ENCODE measurements at regions of chr5 and their contacts with region 1.

Region 1: GRCh38 chr5:76601470-76601869 is 21.7 kb downstream of the F2RL2 start:
- DNase-seq: peak; percentile 78
- H3K4me3 ChIP-seq: no peak overlapping the region
- H3K27ac ChIP-seq: no peak overlapping the region
- H3K4me1 ChIP-seq: peaks cover 4% of the 10 kb centered on the region
- H3K27me3 ChIP-seq: peaks cover 0 to 2% of the 10 kb centered on the region in 2 experiments
- CTCF ChIP-seq: peak; percentile 52
- POLR2A ChIP-seq: no peak

Region 2: GRCh38 chr5:76571559-76571958 is 29.9 kb before region 1 on chr5:
- CTCF ChIA-PET with region 1: no interaction called
- POLR2A ChIA-PET with region 1: no interaction called
- dilution Hi-C with region 1: no loop called
- intact Hi-C with region 1: no loop called
- DNase-seq: no peak
- H3K4me3 ChIP-seq: no peak overlapping the region
- H3K27ac ChIP-seq: no peak overlapping the region
- H3K4me1 ChIP-seq: no peaks in the 10 kb centered on the region
- H3K27me3 ChIP-seq: peaks cover 2 to 6% of the 10 kb centered on the region in 2 experiments
- CTCF ChIP-seq: no peak
- POLR2A ChIP-seq: no peak

Region 3: DNA sequence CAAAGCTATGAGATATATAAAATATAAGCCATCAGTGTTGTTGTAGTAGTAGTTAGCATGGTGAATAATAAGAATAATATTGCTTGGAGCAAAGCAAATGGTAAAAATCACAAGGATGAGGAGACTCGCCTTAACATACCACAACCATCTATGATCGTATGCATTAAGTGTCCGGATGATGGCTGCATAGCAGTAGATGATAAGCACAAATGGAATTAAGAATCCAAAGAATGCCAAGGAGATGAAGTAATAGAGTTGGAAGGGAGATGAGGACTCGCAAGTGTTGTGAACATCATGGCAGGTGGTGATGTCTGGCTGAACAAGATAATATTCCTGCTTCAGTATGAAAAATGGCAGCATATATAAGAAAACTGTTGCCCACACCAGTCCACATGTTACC is 16.2 kb after region 1 on chr5:
- CTCF ChIA-PET with region 1: interaction called, 11 read pairs
- POLR2A ChIA-PET with region 1: no interaction called
- dilution Hi-C with region 1: no loop called
- intact Hi-C with region 1: no loop called
- DNase-seq: no peak
- H3K4me3 ChIP-seq: no peak overlapping the region
- H3K27ac ChIP-seq: no peak overlapping the region
- H3K4me1 ChIP-seq: no peaks in the 10 kb centered on the region
- H3K27me3 ChIP-seq: no peaks in the 10 kb centered on the region
- CTCF ChIP-seq: no peak
- POLR2A ChIP-seq: no peak

Region 4: DNA sequence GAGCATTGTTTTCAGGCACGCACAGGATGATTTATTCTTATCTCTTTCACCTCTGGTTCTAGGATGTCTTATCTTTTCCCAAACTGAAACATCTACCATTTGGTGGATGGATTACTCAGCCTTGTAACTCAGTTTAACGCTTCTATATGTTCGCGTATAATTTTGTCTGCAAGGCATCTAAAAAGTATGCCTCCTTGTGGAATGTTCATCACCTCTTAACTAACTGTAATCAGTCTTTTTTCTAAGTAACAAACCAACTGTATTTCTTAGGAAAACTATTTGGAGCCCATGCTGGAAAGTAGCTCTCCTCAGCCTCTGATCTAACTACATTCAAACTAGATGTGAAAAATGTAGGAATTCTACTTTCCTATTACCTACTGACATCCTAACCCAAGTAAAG is 33.2 kb after region 1 on chr5:
- CTCF ChIA-PET with region 1: interaction called, 126 read pairs
- POLR2A ChIA-PET with region 1: no interaction called
- dilution Hi-C with region 1: no loop called
- intact Hi-C with region 1: no loop called
- DNase-seq: no peak
- H3K4me3 ChIP-seq: no peak overlapping the region
- H3K27ac ChIP-seq: no peak overlapping the region
- H3K4me1 ChIP-seq: peaks cover 6% of the 10 kb centered on the region
- H3K27me3 ChIP-seq: no peaks in the 10 kb centered on the region
- CTCF ChIP-seq: no peak
- POLR2A ChIP-seq: no peak

Region 5: GRCh38 chr5:76691467-76692138 is 90.1 kb after region 1 on chr5:
- CTCF ChIA-PET with region 1: interaction called, 11 read pairs
- POLR2A ChIA-PET with region 1: no interaction called
- dilution Hi-C with region 1: no loop called
- intact Hi-C with region 1: loop called (anchors 1 kb)
- DNase-seq: peak; percentile 98
- H3K4me3 ChIP-seq: no peak overlapping the region
- H3K27ac ChIP-seq: peak overlapping the region; percentile 91
- H3K4me1 ChIP-seq: peaks cover 79% of the 10 kb centered on the region
- H3K27me3 ChIP-seq: no peaks in the 10 kb centered on the region
- CTCF ChIP-seq: no peak
- POLR2A ChIP-seq: peak; percentile 43

Region 6: DNA sequence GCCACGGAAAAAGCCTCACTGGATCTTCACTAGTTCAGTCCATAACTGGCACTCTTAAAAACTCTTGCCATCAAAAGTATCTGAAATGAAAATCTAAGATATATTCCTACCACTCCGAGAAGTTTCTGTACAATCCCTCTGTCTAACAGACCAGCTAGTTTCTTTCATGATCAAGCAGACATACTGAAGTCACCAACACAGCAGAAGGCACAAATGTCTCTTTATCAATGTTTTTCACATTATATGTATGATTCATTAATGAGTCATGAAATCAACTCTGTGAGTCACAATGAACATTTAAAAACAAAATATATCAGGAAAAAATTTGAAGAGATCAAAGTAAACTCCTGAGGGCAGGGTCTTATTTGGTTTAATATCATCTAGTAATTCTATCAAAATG is 165.3 kb after region 1 on chr5:
- CTCF ChIA-PET with region 1: interaction called, 10 read pairs
- POLR2A ChIA-PET with region 1: no interaction called
- dilution Hi-C with region 1: no loop called
- intact Hi-C with region 1: no loop called
- DNase-seq: peak; percentile 68
- H3K4me3 ChIP-seq: no peak overlapping the region
- H3K27ac ChIP-seq: no peak overlapping the region
- H3K4me1 ChIP-seq: peaks cover 7% of the 10 kb centered on the region
- H3K27me3 ChIP-seq: no peaks in the 10 kb centered on the region
- CTCF ChIP-seq: no peak
- POLR2A ChIP-seq: no peak

Region 7: GRCh38 chr5:77015938-77016569 is 414.6 kb after region 1 on chr5:
- CTCF ChIA-PET with region 1: interaction called, 20 read pairs
- POLR2A ChIA-PET with region 1: no interaction called
- dilution Hi-C with region 1: no loop called
- intact Hi-C with region 1: loop called (anchors 1 kb)
- DNase-seq: peak; percentile 66
- H3K4me3 ChIP-seq: no peak overlapping the region
- H3K27ac ChIP-seq: no peak overlapping the region
- H3K4me1 ChIP-seq: no peaks in the 10 kb centered on the region
- H3K27me3 ChIP-seq: peaks cover 13 to 14% of the 10 kb centered on the region in 2 experiments
- CTCF ChIP-seq: peak; percentile 9 to 18
- POLR2A ChIP-seq: no peak